Activated CD4-positive, alpha-beta T cell treated with anti-CD3 and anti-CD28 coated beads, Interleukin-2, amount 10 ng/mL, durations not matched to agents 24 days and 14 days (primary cell): ENCODE measurements at regions of chr4 and their contacts with region 1.

Region 1: GRCh38 chr4:99405433-99406115 is 29.6 kb downstream of the ADH7 start:
- DNase-seq: peak; percentile 88
- H3K4me3 Mint-ChIP-seq: no peak overlapping the region
- H3K27ac Mint-ChIP-seq: no peak overlapping the region
- H3K4me1 Mint-ChIP-seq: peaks cover 12% of the 10 kb centered on the region
- H3K27me3 Mint-ChIP-seq: no peaks in the 10 kb centered on the region

Region 2: DNA sequence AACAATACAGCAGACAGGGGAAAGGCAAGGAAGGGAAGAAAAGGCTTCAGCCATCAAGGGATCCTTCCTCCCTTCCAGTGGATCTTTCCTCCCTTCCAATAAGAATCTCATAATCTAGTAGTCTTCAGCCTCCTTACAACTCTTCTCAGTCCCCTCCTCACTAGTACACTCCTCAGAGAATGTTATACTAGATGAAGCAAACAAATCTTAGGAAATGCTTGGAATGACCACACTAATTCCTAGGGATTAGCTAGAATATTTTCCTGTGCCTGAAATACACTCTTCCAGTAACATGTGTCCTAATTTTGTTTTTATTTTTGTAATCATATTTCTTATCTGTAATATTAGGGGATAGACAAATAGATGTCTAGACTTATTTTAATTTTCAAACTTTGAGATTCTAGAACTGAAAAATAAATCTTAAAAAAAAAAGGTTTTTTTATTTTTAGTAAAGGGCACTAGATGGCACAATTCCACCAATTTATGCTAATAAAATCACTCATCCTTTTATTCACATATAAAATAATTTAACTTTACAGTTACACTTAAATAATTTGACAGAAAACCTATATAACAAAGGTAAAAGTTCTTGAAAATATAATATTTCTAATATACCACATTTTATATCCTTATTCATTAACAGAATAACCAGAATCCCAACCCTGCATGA is 1255.3 kb before region 1 on chr4:
- intact Hi-C with region 1: loop called (anchors 5 kb)
- DNase-seq: no peak
- H3K4me3 Mint-ChIP-seq: no peak overlapping the region
- H3K27ac Mint-ChIP-seq: no peak overlapping the region
- H3K4me1 Mint-ChIP-seq: peaks cover 6% of the 10 kb centered on the region
- H3K27me3 Mint-ChIP-seq: peaks cover 8% of the 10 kb centered on the region

Region 3: DNA sequence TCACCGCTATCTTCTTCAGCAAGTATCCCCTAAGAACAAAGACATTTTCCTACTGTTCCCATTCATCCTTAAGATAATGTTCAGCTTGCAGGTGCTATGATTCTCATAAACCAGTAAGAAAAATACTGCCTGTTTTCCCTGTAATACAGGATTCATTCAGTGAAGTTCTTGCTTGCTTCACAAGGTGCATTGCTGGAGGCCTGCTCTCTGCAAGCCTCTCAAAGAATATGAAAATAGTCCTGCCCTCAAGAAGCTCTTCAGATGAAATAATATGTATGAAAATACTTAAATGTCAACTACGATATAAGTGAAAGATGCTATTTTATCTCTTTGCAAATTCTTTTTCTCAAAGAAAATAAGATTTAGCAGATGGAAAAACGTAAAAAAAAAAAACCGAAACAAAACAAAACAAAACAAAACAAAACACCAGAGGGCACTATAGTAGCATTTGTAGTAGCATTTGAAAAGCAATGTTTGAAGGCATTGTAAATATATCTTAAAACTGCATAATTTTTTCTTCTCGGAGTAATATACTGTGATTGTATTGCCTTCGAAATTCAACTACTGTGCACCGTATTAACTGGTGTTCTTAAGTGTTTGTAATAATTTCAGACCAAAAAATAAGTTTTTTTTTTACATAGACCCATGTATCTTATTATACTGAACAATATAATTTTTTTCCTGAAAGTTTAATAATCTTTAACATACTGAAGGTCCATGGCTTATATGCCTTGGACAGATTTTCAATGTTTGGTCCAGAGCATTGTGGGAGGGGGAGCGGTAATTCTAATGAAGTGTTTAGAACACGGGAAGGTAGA is 287.5 kb before region 1 on chr4:
- intact Hi-C with region 1: loop called (anchors 1 kb)
- DNase-seq: no peak
- H3K4me3 Mint-ChIP-seq: no peak overlapping the region
- H3K27ac Mint-ChIP-seq: no peak overlapping the region
- H3K4me1 Mint-ChIP-seq: no peaks in the 10 kb centered on the region
- H3K27me3 Mint-ChIP-seq: peaks cover 14% of the 10 kb centered on the region

Region 4: GRCh38 chr4:99190336-99190735 is 215.2 kb before region 1 on chr4:
- intact Hi-C with region 1: no loop called
- DNase-seq: no peak
- H3K4me3 Mint-ChIP-seq: no peak overlapping the region
- H3K27ac Mint-ChIP-seq: no peak overlapping the region
- H3K4me1 Mint-ChIP-seq: no peaks in the 10 kb centered on the region
- H3K27me3 Mint-ChIP-seq: no peaks in the 10 kb centered on the region

Region 5: DNA sequence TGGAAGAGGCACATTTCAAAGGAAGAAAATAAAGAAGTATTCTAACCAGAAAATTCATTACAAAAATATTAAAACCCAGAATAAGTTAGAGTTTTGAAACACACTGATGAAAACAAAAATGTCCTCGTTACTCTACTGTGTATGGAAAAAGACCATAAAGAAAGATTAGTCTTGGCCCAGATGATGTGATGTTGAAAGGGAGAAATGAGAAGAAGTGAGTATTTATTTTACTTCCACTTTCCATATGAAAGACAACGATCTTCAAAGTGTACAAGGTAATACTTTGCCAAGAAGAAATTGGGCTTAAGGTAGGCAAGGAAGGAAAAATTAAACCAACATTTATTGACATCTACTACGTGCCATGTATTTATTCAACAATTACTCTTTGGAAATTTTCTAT is 1160.8 kb after region 1 on chr4:
- intact Hi-C with region 1: no loop called
- DNase-seq: no peak
- H3K4me3 Mint-ChIP-seq: peak overlapping the region; percentile 42
- H3K27ac Mint-ChIP-seq: no peak overlapping the region
- H3K4me1 Mint-ChIP-seq: peaks cover 13% of the 10 kb centered on the region
- H3K27me3 Mint-ChIP-seq: peaks cover 2% of the 10 kb centered on the region